Activated naive CD4-positive, alpha-beta T cell treated with anti-CD3 and anti-CD28 coated beads for 36 hours (primary cell): ENCODE measurements at regions of chr19 and their contacts with region 1.

Region 1: DNA sequence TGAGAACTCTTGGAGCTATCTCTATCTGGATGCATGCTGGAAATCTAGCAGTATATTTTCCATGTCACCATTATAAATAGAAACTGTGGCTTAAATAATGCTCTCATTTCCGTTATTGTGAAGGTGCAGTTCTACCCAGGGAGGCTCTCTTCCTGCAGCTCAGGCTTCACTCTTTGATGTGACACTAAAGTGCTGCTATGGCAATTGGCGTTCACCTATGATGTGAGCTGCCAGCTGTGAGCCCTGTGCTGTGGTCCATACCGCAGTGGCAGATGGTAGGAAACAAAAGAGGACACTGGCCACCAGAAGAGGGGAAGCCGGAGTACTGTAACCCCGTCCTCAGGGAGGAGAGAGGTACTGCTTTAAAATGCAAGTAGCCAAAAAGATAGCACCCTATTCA is 40.6 kb upstream of the ZNF681 start:
- DNase-seq: peak; percentile 53
- H3K4me3 Mint-ChIP-seq: peak overlapping the region; percentile 68
- H3K27ac Mint-ChIP-seq: peak overlapping the region; percentile 60
- H3K4me1 Mint-ChIP-seq: peaks cover 21% of the 10 kb centered on the region
- H3K27me3 Mint-ChIP-seq: no peaks in the 10 kb centered on the region

Region 2: GRCh38 chr19:23771841-23772271 is 27.5 kb before region 1 on chr19:
- CTCF ChIA-PET with region 1: no interaction called
- intact Hi-C with region 1: loop called (anchors 2 kb)
- DNase-seq: peak; percentile 27
- H3K4me3 Mint-ChIP-seq: no peak overlapping the region
- H3K27ac Mint-ChIP-seq: peak overlapping the region; percentile 57
- H3K4me1 Mint-ChIP-seq: peaks cover 27% of the 10 kb centered on the region
- H3K27me3 Mint-ChIP-seq: no peaks in the 10 kb centered on the region